WTC11 (cell line): ENCODE measurements at regions of chr2 and their contacts with region 1.

Region 1: DNA sequence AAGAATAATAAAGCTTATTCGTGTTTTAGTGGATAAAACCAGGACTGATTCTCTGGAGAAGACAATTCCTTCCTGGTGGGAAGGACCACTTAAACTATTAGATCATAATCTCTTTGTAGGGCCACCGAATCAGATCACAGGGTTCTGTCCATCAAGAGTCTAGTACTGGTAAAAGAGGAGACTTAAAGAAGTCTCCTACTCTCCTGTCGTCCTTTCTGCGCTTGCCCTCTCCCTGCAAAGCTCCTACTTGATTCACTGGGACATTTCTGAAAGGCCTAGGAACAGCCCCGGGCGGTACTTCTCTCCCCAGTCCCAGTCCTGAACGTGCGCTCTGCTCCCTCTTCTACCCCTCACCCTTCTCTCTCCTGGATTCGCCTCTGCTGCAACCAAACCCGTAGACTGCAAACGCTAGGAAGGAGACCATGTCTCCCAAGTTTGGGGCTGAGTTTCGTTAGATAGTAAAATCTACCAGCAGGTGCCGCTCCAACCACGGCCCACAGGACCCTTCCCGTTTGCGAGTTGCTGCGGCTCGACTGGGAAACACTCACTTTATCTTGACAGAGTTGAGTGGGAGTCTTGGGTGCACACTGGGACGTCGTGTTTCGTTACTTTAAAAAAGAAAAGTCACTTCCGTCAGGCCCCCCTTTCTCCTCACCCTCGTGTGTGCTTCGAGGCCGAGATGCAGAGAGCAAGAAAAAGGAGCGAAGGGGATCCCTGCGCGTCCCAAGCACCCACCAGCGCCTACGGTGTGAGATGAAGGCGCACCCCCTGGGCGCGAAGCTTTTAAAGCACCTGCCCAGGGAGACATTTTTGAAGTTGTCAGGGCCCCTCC is 923 bp downstream of the FIGLA start:
- DNase-seq: peak; percentile 83
- ATAC-seq: peak; percentile 92
- H3K4me3 Mint-ChIP-seq: peak overlapping the region; percentile 72
- H3K27ac Mint-ChIP-seq: no peak overlapping the region; the same call in 1 of the 2 replicates
- H3K4me1 Mint-ChIP-seq: peaks cover 15% of the 10 kb centered on the region
- H3K27me3 Mint-ChIP-seq: peaks cover 90% of the 10 kb centered on the region
- CTCF ChIP-seq: peak; percentile 33

Region 2: DNA sequence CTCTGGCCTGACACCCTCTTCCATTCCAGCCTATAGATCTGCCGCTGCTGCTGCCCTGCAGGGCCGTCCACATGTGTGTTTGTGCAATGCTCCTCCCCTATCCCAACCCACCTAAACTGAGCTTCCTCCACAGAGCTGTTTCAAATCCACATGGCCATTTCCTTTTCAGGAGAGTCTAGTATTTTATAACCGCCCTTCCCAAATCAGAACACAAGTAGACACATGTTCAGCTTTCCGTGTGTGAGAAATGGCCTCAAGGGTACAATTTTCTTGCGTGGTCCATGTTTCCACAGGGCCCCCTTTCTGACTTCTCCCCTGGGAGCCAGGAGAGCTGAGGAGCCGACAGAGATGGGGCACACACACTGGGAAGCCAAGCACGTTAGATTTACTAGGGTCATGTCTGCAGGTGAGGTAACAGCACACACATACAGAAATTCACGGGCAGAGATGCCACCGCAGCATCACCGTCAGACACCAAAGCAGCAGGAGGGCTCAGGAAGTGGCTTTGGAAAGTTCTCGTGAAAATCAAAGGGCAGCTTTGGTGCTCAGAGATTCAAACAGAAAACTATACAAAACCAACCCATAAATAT is 133.0 kb before region 1 on chr2:
- CTCF ChIA-PET with region 1: interaction called, 11 read pairs
- POLR2A ChIA-PET with region 1: no interaction called
- DNase-seq: no peak
- ATAC-seq: peak; percentile 31
- H3K4me3 Mint-ChIP-seq: no peak overlapping the region
- H3K27ac Mint-ChIP-seq: no peak overlapping the region
- H3K4me1 Mint-ChIP-seq: peaks cover 22% of the 10 kb centered on the region
- H3K27me3 Mint-ChIP-seq: peaks cover 53% of the 10 kb centered on the region
- CTCF ChIP-seq: no peak

Region 3: GRCh38 chr2:70686577-70687460 is 102.7 kb before region 1 on chr2:
- CTCF ChIA-PET with region 1: interaction called, 43 read pairs
- POLR2A ChIA-PET with region 1: no interaction called
- DNase-seq: peak; percentile 84
- ATAC-seq: peak; percentile 96
- H3K4me3 Mint-ChIP-seq: no peak overlapping the region
- H3K27ac Mint-ChIP-seq: peak overlapping the region; percentile 13; the same call in 1 of the 2 replicates
- H3K4me1 Mint-ChIP-seq: peaks cover 13% of the 10 kb centered on the region
- H3K27me3 Mint-ChIP-seq: no peaks in the 10 kb centered on the region
- CTCF ChIP-seq: peak; percentile 44

Region 4: GRCh38 chr2:70716131-70716743 is 73.3 kb before region 1 on chr2:
- CTCF ChIA-PET with region 1: interaction called, 19 read pairs
- POLR2A ChIA-PET with region 1: no interaction called
- DNase-seq: no peak
- ATAC-seq: peak; percentile 18
- H3K4me3 Mint-ChIP-seq: no peak overlapping the region
- H3K27ac Mint-ChIP-seq: peak overlapping the region; percentile 19; the same call in 1 of the 2 replicates
- H3K4me1 Mint-ChIP-seq: peaks cover 80% of the 10 kb centered on the region
- H3K27me3 Mint-ChIP-seq: no peaks in the 10 kb centered on the region
- CTCF ChIP-seq: no peak

Region 5: DNA sequence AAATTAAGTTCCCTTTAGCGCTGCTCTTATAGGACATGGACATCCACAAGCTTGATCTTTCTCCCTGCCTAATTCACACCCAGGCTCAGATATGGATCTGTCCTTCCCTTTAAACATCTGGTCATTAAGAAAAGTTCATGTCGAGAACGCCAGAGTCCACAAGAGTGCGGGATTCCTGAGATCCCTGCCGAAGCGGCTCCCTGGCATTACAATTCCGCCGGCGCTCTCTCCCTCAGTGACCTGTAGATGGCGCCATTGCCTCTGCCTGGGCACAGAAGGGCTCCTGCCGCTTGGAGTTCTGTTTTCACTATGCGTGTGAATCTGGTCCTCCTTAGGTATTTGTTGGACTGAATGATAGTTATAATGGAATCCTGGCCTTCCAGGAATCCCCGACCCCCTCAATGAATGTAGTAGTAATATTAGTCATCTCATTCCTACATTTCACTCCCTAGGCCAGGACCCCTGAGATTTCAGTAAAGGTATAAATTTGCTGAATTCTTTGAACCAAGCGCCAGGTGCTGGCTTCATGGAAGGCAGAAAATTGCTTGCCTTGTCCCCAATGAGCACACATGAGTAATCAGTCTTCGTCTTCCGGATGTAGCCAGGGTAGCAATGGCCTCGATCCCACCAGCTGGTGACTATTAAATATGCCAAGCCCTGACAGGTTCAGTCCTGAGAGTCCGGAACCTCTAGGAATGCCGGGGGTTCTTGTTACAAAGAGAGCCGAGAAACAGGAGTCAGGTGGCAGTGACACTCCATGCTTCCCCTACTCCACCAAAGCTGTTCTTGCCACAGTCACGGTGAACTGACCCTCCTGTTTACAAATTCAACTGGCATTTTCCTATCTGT is 72.5 kb after region 1 on chr2:
- CTCF ChIA-PET with region 1: interaction called, 12 read pairs
- POLR2A ChIA-PET with region 1: no interaction called
- DNase-seq: peak; percentile 93
- ATAC-seq: peak; percentile 89
- H3K4me3 Mint-ChIP-seq: no peak overlapping the region
- H3K27ac Mint-ChIP-seq: no peak overlapping the region
- H3K4me1 Mint-ChIP-seq: peaks cover 3% of the 10 kb centered on the region; the same call in 1 of the 2 replicates
- H3K27me3 Mint-ChIP-seq: peaks cover 85% of the 10 kb centered on the region
- CTCF ChIP-seq: peak; percentile 92

Region 6: DNA sequence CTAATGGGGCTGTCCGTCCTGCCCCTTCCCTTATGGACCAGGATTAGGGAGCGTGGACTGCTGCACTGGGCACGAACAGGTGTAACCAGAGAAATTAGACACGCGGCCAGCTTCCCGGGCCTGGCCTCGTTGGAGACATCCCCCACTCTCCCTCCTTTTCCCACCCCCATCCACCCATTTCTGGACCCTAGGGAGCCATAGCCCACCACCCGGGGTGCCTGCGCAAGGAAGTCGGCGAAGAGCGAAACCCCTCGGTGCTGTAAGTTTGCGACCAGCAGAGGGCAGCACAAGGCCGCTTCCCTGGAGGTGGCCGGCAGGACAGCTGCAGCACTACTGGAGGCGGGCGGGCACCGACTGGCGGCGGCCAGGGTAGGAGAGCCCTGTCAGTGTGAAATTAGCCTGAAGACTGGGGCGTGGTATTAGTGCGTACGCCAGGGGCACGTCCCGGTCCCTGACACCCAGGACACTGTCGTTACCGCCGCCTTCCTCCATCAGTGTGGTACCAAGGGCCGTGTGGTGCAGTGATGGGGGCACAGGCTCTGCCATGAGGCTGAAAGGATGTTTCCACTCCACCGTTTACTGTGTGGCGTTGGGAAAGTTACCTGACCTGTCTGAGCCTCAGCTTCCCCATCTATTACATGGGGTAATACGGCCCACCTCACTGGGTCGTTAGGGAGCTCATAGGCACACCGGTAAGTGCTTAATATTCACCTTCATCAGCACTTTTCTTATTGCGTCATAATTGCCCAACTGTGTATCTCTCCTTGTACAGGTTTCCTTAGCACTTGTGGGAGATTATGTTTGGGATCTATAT is 82.1 kb after region 1 on chr2:
- CTCF ChIA-PET with region 1: interaction called, 24 read pairs
- POLR2A ChIA-PET with region 1: no interaction called
- DNase-seq: peak; percentile 95
- ATAC-seq: peak; percentile 98
- H3K4me3 Mint-ChIP-seq: no peak overlapping the region
- H3K27ac Mint-ChIP-seq: no peak overlapping the region
- H3K4me1 Mint-ChIP-seq: no peaks in the 10 kb centered on the region
- H3K27me3 Mint-ChIP-seq: peaks cover 65% of the 10 kb centered on the region
- CTCF ChIP-seq: peak; percentile 79